GM12878 (cell line): ENCODE measurements at regions of chr3 and their contacts with region 1.

Region 1: GRCh38 chr3:38136777-38137614 is at the start of gene ACAA1:
- DNase-seq: peak; percentile 97
- ATAC-seq: peak; percentile 88
- H3K4me3 ChIP-seq: peak within 1 kb of the TSS; percentile 98
- H3K27ac ChIP-seq: peak within 1 kb of the TSS; percentile 99
- H3K4me1 ChIP-seq: peaks cover 27% of the 10 kb centered on the region
- H3K27me3 ChIP-seq: no peaks in the 10 kb centered on the region
- CTCF ChIP-seq: no peak
- EP300 ChIP-seq: no peak
- POLR2A ChIP-seq: peak; percentile 89
- RAD21 ChIP-seq: no peak
- polyA plus RNA-seq, gene ACAA1: 5.7 to 12.6 TPM

Region 2: GRCh38 chr3:38154033-38154494 is 17.1 kb after region 1 on chr3:
- CTCF ChIA-PET with region 1: interaction called, 5 read pairs
- POLR2A ChIA-PET with region 1: interaction called, 48 read pairs
- RAD21 ChIA-PET with region 1: interaction called, 4 read pairs
- SMC1A ChIA-PET with region 1: interaction called, 89 read pairs
- in situ Hi-C with region 1: no loop called
- intact Hi-C with region 1: no loop called
- DNase-seq: no peak
- ATAC-seq: no peak
- H3K4me3 ChIP-seq: no peak overlapping the region
- H3K27ac ChIP-seq: no peak overlapping the region; the same call in 1 of the 2 replicates
- H3K4me1 ChIP-seq: peaks cover 7% of the 10 kb centered on the region; the same call in 1 of the 2 replicates
- H3K27me3 ChIP-seq: no peaks in the 10 kb centered on the region
- CTCF ChIP-seq: no peak
- EP300 ChIP-seq: no peak
- POLR2A ChIP-seq: no peak
- RAD21 ChIP-seq: no peak

Region 3: DNA sequence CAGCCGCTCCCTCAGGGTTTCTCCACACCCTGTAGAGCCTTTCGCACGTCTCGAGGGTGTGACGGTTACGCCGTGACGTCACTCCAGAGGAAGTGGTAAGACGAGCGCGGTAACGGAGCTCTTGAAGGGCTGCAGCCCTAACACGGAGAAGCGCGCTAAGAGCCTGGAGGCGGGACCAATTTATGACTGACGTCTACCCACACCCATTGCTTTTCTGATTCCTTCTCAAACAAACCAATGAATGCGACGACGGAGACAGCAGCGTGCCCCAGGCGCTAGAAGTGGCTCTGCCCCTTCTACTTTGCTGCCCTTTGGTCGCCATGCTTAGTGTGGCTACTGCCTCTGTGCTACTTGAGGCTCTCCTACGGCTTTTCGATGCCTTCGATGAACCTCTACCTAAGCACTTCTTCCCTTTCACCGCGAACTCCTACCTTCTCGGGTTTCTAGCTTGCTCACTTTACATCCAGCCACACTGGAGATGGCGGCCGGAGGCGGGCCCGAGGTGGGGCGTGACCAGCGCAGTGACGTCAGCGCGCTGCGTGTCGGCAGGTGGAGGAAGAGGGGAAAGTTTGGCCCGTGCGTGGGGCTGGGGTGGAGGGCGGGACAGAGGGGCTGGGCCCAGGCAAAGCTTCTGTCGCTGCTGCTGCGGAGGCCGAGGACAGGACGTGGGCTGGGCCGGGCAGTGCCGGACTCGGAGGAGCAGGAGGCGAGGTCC is 28.1 kb after region 1 on chr3 and contains the start of gene OXSR1:
- CTCF ChIA-PET with region 1: interaction called, 74 read pairs
- POLR2A ChIA-PET with region 1: interaction called, 146 read pairs
- RAD21 ChIA-PET with region 1: interaction called, 62 read pairs
- SMC1A ChIA-PET with region 1: interaction called, 92 read pairs
- in situ Hi-C with region 1: no loop called
- intact Hi-C with region 1: loop called (anchors 1 kb)
- DNase-seq: peak; percentile 100
- ATAC-seq: peak; percentile 89
- H3K4me3 ChIP-seq: peak within 1 kb of the TSS; percentile 92
- H3K27ac ChIP-seq: peak within 1 kb of the TSS; percentile 100
- H3K4me1 ChIP-seq: peaks cover 4% of the 10 kb centered on the region; the same call in 1 of the 2 replicates
- H3K27me3 ChIP-seq: no peaks in the 10 kb centered on the region
- CTCF ChIP-seq: no peak
- EP300 ChIP-seq: no peak; a peak in 1 of 4 replicates
- POLR2A ChIP-seq: peak; percentile 93
- RAD21 ChIP-seq: no peak
- polyA plus RNA-seq, gene OXSR1: 12.4 to 16.9 TPM

Region 4: DNA sequence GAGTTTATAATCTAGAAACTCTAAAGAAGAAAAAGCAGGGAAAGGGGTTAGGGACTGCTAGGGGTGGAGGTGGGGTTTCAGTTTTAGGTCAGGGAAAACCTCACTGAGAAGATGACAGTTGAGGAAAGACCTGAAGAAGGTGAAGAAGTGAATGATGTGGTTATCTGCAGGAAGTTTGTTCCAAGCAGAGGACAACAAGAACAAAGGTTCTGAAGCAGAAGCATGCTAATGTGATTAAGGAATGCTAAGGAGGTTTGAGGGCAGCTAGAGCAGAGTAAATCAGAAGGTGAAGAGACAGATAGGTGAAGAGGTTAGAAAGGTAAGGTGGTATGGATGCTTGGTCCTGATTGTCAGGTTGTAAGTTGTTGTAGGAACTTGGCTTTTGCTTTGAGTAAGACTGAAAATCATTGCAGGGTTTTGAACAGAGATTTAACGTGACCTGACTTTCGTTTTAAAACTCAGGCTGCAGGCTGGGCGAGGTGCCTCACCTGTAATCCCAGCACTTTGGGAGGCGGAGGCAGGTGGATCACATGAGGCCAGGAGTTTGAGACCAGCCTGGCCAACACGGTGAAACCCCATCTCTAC is 36.9 kb after region 1 on chr3:
- CTCF ChIA-PET with region 1: interaction called, 6 read pairs
- POLR2A ChIA-PET with region 1: interaction called, 8 read pairs
- RAD21 ChIA-PET with region 1: interaction called, 6 read pairs
- SMC1A ChIA-PET with region 1: interaction called, 18 read pairs
- in situ Hi-C with region 1: no loop called
- intact Hi-C with region 1: no loop called
- DNase-seq: no peak
- ATAC-seq: peak; percentile 64
- H3K4me3 ChIP-seq: peak overlapping the region; percentile 54
- H3K27ac ChIP-seq: peak overlapping the region; percentile 2; the same call in 1 of the 2 replicates
- H3K4me1 ChIP-seq: peaks cover 30% of the 10 kb centered on the region
- H3K27me3 ChIP-seq: no peaks in the 10 kb centered on the region
- CTCF ChIP-seq: no peak
- EP300 ChIP-seq: no peak
- POLR2A ChIP-seq: no peak
- RAD21 ChIP-seq: no peak

Region 5: DNA sequence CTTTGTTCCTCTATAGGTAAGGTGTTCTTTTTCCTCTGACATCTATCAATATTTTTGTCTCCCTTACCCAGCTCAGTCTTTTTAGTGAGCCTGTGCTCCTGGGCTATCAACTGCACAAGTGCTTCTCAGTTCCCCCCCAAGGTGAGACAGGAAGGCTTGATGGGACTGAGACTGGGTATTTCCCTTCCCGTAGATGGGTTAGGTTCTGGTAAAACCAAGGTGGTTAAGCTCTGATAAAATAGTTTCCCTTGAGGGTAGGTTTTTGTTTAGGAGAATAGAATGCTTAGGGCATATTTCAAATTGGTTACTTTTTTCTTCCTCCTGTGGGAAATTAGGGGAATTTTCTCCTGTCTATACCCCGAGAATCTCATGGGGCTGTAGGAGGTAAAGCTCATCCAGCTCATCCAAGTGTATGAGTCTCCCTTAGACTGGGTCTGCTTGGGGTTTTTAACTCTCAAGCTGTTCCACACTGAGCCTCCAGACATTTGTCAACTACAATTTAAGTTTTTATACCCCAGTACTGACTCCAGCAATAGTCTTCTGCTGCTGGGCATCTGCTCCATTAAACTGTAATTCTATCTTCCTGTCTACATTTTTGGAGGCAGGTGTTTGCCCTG is 73.3 kb after region 1 on chr3:
- CTCF ChIA-PET with region 1: interaction called, 5 read pairs
- POLR2A ChIA-PET with region 1: interaction called, 17 read pairs
- RAD21 ChIA-PET with region 1: interaction called, 5 read pairs
- SMC1A ChIA-PET with region 1: interaction called, 13 read pairs
- in situ Hi-C with region 1: no loop called
- intact Hi-C with region 1: loop called (anchors 5 kb)
- DNase-seq: peak; percentile 65
- ATAC-seq: peak; percentile 92
- H3K4me3 ChIP-seq: no peak overlapping the region
- H3K27ac ChIP-seq: peak overlapping the region; percentile 59
- H3K4me1 ChIP-seq: peaks cover 20% of the 10 kb centered on the region
- H3K27me3 ChIP-seq: no peaks in the 10 kb centered on the region
- CTCF ChIP-seq: no peak
- EP300 ChIP-seq: peak in 1 of 2 experiments; percentile 35; a peak in 1 of 4 replicates
- POLR2A ChIP-seq: no peak
- RAD21 ChIP-seq: no peak

Region 6: GRCh38 chr3:38297947-38298711 is 161.1 kb after region 1 on chr3:
- CTCF ChIA-PET with region 1: interaction called, 54 read pairs
- POLR2A ChIA-PET with region 1: no interaction called
- RAD21 ChIA-PET with region 1: interaction called, 3 read pairs
- SMC1A ChIA-PET with region 1: interaction called, 18 read pairs
- in situ Hi-C with region 1: no loop called
- intact Hi-C with region 1: no loop called
- DNase-seq: peak; percentile 5
- ATAC-seq: peak; percentile 83
- H3K4me3 ChIP-seq: no peak overlapping the region
- H3K27ac ChIP-seq: no peak overlapping the region
- H3K4me1 ChIP-seq: no peaks in the 10 kb centered on the region
- H3K27me3 ChIP-seq: no peaks in the 10 kb centered on the region
- CTCF ChIP-seq: peak; percentile 23 to 40 (median 28); a peak in 3 of 6 replicates
- EP300 ChIP-seq: no peak
- POLR2A ChIP-seq: no peak
- RAD21 ChIP-seq: peak; percentile 35